Head of caudate nucleus (tissue), 42 donors: ENCODE measurements at regions of chr14 and their contacts with region 1.

Region 1: GRCh38 chr14:69242311-69243224 is 17.4 kb upstream of the GALNT16 start:
- DNase-seq: peak in 33 of 42 donors; percentile 28 to 86 (median 65)

Region 2: GRCh38 chr14:69363055-69363454 is 120.5 kb after region 1 on chr14:
- intact Hi-C with region 1: loop called (anchors 5 kb)
- DNase-seq: peak in 39 of 42 donors; percentile 22 to 77 (median 56)

Region 3: DNA sequence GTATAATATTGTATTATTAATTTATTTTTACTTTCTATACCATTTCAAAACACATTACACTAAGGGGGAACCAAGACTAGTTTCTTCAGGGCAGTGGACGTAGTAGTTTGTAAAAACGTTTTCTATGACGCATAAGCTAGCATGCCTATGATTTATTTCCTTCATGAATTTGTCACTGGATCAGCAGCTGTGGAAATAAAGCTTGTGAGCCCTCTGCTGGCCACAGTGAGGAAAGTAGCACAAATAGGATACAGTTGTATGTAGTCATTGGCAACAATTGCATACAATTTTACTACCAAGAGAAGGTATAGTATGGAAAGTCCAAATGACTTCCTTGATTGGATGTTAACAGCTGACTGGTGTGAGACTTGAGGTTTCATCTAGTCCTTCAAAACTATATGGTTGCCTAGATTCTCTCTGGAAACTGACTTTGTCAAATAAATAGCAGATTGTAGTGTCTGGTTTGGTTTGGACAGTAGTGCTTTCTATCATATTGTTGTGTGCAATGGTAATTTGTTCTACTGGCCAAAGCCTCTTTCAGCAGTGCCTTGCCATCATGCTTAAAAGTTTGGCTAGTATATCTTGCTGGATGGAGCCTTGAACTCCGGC is 217.6 kb after region 1 on chr14:
- intact Hi-C with region 1: loop called (anchors 2 kb)
- DNase-seq: peak; percentile 16 to 84 (median 66)